IMR-90 (cell line): ENCODE measurements at regions of chr16 and their contacts with region 1.

Region 1: DNA sequence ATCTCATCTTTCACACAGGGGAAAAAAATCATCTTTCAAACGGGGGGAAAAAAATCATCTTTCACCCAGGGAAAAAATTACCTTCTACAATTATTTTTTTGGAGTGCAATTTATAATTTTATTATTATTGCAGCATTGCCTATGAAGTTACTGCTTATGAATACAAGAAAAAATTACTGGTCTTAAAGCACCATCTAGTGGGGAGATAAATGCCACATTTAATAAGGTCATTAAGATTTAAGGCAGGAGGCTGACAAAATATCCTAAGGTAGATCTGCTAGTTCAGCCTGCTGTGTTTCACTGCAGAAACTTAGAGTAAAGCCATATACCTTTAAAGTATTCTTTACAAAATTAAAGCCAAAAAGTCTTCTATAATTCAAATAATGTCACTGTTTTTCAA is 13.7 kb downstream of the SHCBP1 start:
- DNase-seq: peak; percentile 76
- ATAC-seq: peak; percentile 88
- H3K4me3 ChIP-seq: no peak overlapping the region
- H3K27ac ChIP-seq: no peak overlapping the region
- H3K4me1 ChIP-seq: no peaks in the 10 kb centered on the region
- H3K27me3 ChIP-seq: no peaks in the 10 kb centered on the region
- CTCF ChIP-seq: peak; percentile 66
- POLR2A ChIP-seq: no peak
- RAD21 ChIP-seq: peak; percentile 64

Region 2: DNA sequence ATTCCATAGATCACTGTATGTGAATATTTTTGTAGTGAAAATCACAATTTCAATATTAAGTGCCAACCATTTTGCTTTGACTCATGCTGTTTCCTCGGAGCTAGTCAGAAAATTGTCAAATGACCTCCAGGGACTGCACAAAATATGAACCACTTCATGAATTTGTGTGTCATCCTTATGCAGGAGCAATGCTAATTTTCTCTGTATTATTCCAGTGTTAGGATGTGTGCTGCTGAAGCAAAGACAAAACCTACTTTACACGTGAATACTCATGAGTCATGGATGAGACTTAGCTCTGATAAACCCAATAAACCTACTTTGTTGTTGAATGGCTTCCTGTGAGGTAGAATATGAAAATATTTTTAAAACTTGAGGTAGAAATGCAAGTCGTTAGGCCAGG is 51.6 kb before region 1 on chr16:
- CTCF ChIA-PET with region 1: interaction called, 15 read pairs
- POLR2A ChIA-PET with region 1: no interaction called
- dilution Hi-C with region 1: no loop called
- in situ Hi-C with region 1: loop called (anchors 5 kb)
- intact Hi-C with region 1: loop called (anchors 1 kb)
- DNase-seq: peak; percentile 54
- ATAC-seq: peak; percentile 16; the same call in 1 of the 2 replicates
- H3K4me3 ChIP-seq: no peak overlapping the region
- H3K27ac ChIP-seq: no peak overlapping the region
- H3K4me1 ChIP-seq: no peaks in the 10 kb centered on the region
- H3K27me3 ChIP-seq: no peaks in the 10 kb centered on the region
- CTCF ChIP-seq: no peak
- POLR2A ChIP-seq: no peak
- RAD21 ChIP-seq: no peak

Region 3: GRCh38 chr16:48546774-48547173 is 1939.2 kb after region 1 on chr16:
- CTCF ChIA-PET with region 1: no interaction called
- POLR2A ChIA-PET with region 1: no interaction called
- dilution Hi-C with region 1: no loop called
- in situ Hi-C with region 1: no loop called
- intact Hi-C with region 1: no loop called
- DNase-seq: no peak
- ATAC-seq: no peak
- H3K4me3 ChIP-seq: no peak overlapping the region
- H3K27ac ChIP-seq: no peak overlapping the region
- H3K4me1 ChIP-seq: no peaks in the 10 kb centered on the region
- H3K27me3 ChIP-seq: no peaks in the 10 kb centered on the region
- CTCF ChIP-seq: no peak
- POLR2A ChIP-seq: no peak
- RAD21 ChIP-seq: no peak